A549 (cell line): ENCODE measurements at regions of chr5 and their contacts with region 1.

Region 1: DNA sequence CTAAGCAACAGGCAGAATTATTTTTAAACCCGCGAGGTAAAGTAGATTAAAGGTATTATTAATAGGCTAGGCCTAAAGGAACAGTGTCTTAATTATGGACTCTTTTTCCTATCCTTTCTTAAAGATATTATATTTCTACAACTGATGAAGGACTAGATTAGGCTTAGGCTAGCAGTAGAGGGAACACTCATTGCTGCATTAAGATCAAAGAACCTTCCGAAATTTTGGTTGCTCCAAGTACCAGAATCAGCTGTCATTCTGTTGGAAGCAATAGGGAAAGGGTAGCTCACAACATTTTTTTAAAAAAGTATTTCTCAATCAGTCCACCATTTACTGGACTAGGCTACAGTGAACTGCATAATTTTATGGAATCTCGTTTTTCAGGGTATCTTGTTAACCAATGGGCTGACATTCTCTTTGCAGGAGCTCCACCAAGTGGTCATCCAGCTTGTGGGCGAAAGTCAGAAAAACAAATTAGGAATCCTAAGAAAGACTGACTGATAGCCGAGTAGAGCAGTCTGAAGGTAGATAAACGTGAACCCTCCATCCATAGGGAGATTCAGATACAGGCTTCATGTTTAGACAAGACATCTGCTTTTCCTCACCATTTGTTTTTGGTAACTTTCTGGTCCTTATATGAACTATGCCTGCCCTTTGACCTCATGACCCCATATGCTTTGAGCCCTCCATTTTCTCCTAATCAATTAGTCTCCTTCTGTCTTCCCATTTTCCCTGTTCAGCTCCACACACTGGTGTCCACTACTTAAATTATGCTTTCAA is 103.6 kb upstream of the CHD1 start:
- DNase-seq: peak; percentile 67 to 76
- ATAC-seq: peak; percentile 87 to 91
- H3K4me3 ChIP-seq: peak overlapping the region; percentile 25; the same call in 2 of the 3 replicates
- H3K27ac ChIP-seq: peak overlapping the region in 1 of 2 experiments; percentile 58; a peak in 2 of 6 replicates
- H3K4me1 ChIP-seq: peaks cover 5% of the 10 kb centered on the region; the same call in 2 of the 3 replicates
- CTCF ChIP-seq: peak; percentile 93
- EP300 ChIP-seq: no peak
- POLR2A ChIP-seq: no peak
- RAD21 ChIP-seq: peak; percentile 96 to 97

Region 2: DNA sequence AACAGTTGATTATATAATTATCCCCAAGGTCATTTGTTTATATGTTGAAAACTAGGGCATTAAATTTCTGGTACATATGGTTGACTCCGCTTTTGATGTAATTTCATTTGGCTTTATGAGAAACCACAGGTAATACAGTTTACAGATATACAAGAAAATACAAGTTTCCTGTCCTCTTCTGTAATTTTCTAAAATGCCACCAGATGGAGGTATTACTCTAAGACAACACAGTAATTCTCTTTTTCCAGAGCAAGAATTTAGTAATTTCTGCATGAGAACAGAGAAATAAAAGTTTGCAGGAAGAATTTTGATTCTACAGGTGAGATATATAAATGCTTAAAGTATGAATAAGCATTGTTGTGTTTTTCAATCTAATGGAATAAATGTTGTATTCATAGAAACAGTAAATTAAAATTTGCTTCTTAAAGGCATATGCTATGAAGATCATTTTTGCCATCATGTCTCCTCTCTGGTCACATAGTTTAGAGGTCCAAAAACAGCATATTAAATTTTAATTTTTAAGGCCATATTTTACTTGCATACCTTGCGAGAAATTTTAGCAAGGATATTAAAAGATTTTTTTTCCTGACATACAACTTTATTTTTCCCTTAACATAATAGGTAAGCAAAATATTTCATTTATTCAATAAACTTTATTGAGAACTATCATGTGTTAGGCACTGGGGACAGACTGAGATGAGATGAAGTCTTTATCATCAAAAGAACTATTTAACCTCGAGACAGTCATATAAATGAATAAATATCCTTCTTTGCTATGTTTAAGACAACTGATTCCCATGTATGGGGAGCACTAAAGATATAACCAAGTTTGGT is 126.3 kb before region 1 on chr5:
- CTCF ChIA-PET with region 1: interaction called, 40 read pairs
- POLR2A ChIA-PET with region 1: no interaction called
- DNase-seq: peak in 1 of 2 experiments; percentile 48
- ATAC-seq: peak; percentile 66 to 67; a peak in 3 of 6 replicates
- H3K4me3 ChIP-seq: no peak overlapping the region
- H3K27ac ChIP-seq: no peak overlapping the region
- H3K4me1 ChIP-seq: peaks cover 24% of the 10 kb centered on the region
- CTCF ChIP-seq: peak; percentile 76
- EP300 ChIP-seq: no peak
- POLR2A ChIP-seq: no peak
- RAD21 ChIP-seq: peak; percentile 75 to 82

Region 3: GRCh38 chr5:98911280-98912040 is 121.0 kb before region 1 on chr5:
- CTCF ChIA-PET with region 1: interaction called, 40 read pairs
- POLR2A ChIA-PET with region 1: no interaction called
- DNase-seq: no peak
- ATAC-seq: no peak
- H3K4me3 ChIP-seq: no peak overlapping the region
- H3K27ac ChIP-seq: no peak overlapping the region
- H3K4me1 ChIP-seq: peaks cover 2% of the 10 kb centered on the region; the same call in 2 of the 3 replicates
- CTCF ChIP-seq: no peak
- EP300 ChIP-seq: no peak
- POLR2A ChIP-seq: no peak
- RAD21 ChIP-seq: no peak

Region 4: GRCh38 chr5:98928873-98929696 is 103.3 kb before region 1 on chr5 and contains the start of gene CHD1:
- CTCF ChIA-PET with region 1: interaction called, 6 read pairs
- POLR2A ChIA-PET with region 1: interaction called, 12 read pairs
- DNase-seq: peak; percentile 92 to 97
- ATAC-seq: peak; percentile 78 to 82
- H3K4me3 ChIP-seq: peak within 1 kb of the TSS; percentile 79
- H3K27ac ChIP-seq: peak within 1 kb of the TSS; percentile 96 to 98
- H3K4me1 ChIP-seq: peaks cover 27% of the 10 kb centered on the region
- CTCF ChIP-seq: no peak
- EP300 ChIP-seq: peak in 1 of 2 experiments; percentile 39; a peak in 1 of 5 replicates
- POLR2A ChIP-seq: peak; percentile 68
- RAD21 ChIP-seq: no peak
- polyA plus RNA-seq, gene CHD1: 43.2 and 53.9 TPM in 2 replicates

Region 5: GRCh38 chr5:98969400-98969799 is 63.0 kb before region 1 on chr5:
- CTCF ChIA-PET with region 1: no interaction called
- POLR2A ChIA-PET with region 1: no interaction called
- DNase-seq: no peak
- ATAC-seq: no peak
- H3K4me3 ChIP-seq: no peak overlapping the region
- H3K27ac ChIP-seq: no peak overlapping the region
- H3K4me1 ChIP-seq: no peaks in the 10 kb centered on the region
- CTCF ChIP-seq: no peak
- EP300 ChIP-seq: no peak
- POLR2A ChIP-seq: no peak
- RAD21 ChIP-seq: no peak

Region 6: DNA sequence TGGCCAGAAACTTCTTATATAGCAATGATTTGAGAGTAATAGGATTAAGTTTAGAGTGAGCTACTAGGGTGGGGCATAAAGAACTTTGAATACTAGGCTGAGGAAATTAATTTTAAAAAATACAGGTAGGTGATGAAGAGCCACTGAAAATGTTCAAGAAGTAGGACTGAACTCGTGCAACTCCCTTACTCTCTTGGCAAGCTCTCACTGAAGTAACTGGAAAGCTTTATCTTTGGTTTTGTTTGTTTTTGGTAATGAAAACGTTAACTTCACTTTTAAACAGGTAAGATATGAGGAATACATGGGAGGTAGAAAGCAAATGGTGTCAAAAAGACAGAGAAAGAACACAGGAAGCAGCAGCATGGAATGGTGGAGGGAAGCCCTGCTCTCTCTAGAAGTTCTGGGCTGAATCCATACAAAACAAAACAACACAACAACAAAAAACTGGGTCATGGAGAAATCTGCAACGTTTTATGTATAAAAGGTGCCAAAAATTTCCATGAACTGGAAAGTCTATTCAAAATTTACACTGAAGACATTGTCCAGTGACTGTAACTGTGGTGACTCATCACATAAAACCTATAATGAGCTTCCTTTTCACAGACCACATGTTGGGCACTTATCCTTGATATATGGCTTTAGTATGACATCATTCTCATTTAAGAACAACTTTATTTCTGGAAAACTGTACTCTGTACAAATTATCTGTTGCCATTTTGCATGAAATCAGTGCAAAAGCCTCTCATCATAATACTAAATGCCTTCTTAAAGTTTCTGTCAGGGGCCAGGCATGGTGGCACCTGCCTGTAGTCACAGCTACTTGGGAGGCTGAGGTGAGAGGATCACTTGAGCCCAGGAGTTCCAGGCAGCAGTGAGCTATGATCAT is 12.4 kb before region 1 on chr5:
- CTCF ChIA-PET with region 1: interaction called, 12 read pairs
- POLR2A ChIA-PET with region 1: no interaction called
- DNase-seq: peak in 1 of 2 experiments; percentile 40
- ATAC-seq: peak; percentile 74; a peak in 5 of 6 replicates
- H3K4me3 ChIP-seq: no peak overlapping the region
- H3K27ac ChIP-seq: peak overlapping the region; percentile 41 to 56; a peak in 5 of 6 replicates
- H3K4me1 ChIP-seq: peaks cover 19% of the 10 kb centered on the region
- CTCF ChIP-seq: no peak
- EP300 ChIP-seq: no peak
- POLR2A ChIP-seq: no peak
- RAD21 ChIP-seq: no peak

Region 7: GRCh38 chr5:99060306-99061261 is 28.2 kb after region 1 on chr5:
- CTCF ChIA-PET with region 1: interaction called, 28 read pairs
- POLR2A ChIA-PET with region 1: no interaction called
- DNase-seq: peak; percentile 60 to 63
- ATAC-seq: peak; percentile 67 to 83; a peak in 5 of 6 replicates
- H3K4me3 ChIP-seq: no peak overlapping the region
- H3K27ac ChIP-seq: no peak overlapping the region
- H3K4me1 ChIP-seq: 0 out of 3 replicates have a peak, but pooled peaks cover 4% of the 10 kb centered on the region
- CTCF ChIP-seq: peak; percentile 90
- EP300 ChIP-seq: no peak
- POLR2A ChIP-seq: no peak
- RAD21 ChIP-seq: peak; percentile 80 to 81

Region 8: GRCh38 chr5:99179206-99179605 is 146.8 kb after region 1 on chr5:
- CTCF ChIA-PET with region 1: no interaction called
- POLR2A ChIA-PET with region 1: no interaction called
- DNase-seq: no peak
- ATAC-seq: no peak
- H3K4me3 ChIP-seq: no peak overlapping the region
- H3K27ac ChIP-seq: no peak overlapping the region
- H3K4me1 ChIP-seq: no peaks in the 10 kb centered on the region
- CTCF ChIP-seq: no peak
- EP300 ChIP-seq: no peak
- POLR2A ChIP-seq: no peak
- RAD21 ChIP-seq: no peak